Activated CD4-positive, alpha-beta memory T cell treated with anti-CD3 and anti-CD28 coated beads for 36 hours (primary cell): ENCODE measurements at regions of chr10 and their contacts with region 1.

Region 1: DNA sequence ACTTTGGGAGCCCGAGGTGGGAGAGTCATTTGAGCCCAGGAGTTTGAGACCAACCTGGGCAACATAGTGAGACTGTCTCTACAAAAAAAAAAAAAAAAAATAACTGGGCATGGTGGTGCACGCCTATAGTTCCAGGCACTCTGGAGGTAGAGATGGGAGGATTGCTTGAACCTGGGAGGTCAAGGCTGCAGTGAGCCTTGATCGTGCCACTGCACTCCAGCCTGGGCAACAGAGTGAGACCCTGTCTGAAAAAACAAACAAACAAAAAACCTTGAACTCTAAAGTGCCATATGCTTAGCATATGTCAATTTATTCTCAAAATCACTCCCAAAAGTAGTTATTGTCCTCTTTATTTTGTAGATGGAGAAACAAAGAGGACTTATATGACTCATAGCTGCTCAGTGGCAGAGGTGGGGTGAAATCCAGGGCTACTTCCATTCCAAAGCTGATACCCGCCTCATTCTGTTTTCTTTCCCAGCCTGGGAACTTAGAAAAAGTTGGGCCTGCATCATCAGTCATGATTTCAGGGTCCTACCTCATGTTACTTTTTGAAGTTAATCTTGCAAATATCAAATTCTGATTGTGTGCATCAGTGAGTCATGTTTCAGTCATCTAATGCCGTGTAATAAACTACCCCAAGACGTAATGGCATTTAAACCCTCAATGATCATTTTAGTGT is 13.3 kb downstream of the DHTKD1 start:
- DNase-seq: no peak
- H3K4me3 Mint-ChIP-seq: no peak overlapping the region
- H3K27ac Mint-ChIP-seq: no peak overlapping the region
- H3K4me1 Mint-ChIP-seq: no peaks in the 10 kb centered on the region
- H3K27me3 Mint-ChIP-seq: no peaks in the 10 kb centered on the region

Region 2: DNA sequence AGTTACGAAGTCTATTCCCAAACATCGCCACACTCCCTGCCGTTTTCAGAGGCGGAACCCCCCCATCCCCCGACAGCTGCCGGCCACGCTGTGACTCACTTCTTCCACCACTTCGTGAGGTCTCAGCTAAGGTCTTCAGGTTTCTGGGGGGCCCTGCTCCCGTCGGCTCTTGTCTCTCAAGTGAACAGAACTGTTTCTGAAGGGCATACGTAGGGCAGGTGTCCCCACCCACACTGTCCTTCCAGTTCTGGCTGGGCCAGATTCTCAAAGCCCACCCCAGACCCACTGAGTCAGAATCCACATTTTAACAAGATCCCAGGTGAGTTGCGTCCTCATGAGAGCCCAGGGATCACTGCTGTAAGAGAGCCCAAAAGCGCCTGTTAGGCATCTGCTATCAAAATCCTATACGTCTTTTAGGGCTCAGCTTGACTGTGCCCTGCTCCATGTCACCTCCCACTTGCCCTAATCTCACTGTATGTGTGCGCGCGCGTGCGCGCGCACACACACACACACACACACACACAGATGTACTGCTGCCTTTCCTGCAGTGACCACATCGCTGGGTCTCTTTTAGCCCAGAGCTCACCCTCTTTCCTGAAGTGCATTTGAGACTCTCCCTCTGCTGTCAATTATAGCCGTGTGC is 180.1 kb before region 1 on chr10:
- CTCF ChIA-PET with region 1: no interaction called
- POLR2A ChIA-PET with region 1: no interaction called
- intact Hi-C with region 1: no loop called
- DNase-seq: no peak
- H3K4me3 Mint-ChIP-seq: no peak overlapping the region
- H3K27ac Mint-ChIP-seq: no peak overlapping the region
- H3K4me1 Mint-ChIP-seq: no peaks in the 10 kb centered on the region
- H3K27me3 Mint-ChIP-seq: no peaks in the 10 kb centered on the region

Region 3: DNA sequence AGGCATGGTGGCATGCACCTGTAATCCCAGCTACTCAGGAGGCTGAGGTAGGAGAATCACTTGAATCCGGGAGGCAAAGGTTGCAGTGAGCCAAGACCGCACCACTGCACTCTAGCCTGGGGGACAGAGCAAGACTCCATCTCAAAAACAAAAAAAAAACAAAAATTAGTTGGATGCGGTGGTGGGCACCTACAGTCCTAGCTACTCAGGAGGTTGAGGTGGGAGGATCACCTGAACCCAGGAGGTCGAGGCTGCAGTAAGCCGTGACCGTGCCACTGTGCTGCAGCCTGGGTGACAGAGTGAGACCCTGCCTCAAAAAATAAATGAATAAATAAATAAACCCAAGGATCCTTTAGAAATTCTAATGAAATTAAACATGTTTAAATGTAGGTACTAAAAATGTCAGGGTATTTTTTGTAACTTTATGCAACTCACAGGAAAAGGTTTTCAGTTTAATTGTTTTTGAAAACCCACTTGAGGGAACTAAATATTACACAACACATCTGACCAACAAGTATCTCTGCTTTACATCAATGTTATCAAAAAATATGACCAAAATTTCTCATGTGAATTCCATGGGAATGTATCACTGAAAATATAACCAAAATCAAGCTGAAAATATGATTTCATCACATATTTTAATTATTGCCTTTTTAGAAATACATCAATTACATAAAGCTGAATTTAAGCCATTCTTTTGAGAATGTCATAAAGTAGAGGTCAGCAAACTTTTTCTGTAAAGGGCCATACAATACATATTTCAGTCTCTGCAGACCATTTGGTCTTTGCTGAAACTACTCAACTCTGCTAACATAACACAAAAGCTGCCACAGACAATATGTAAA is 63.4 kb before region 1 on chr10:
- CTCF ChIA-PET with region 1: no interaction called
- POLR2A ChIA-PET with region 1: no interaction called
- intact Hi-C with region 1: no loop called
- DNase-seq: no peak
- H3K4me3 Mint-ChIP-seq: no peak overlapping the region
- H3K27ac Mint-ChIP-seq: no peak overlapping the region
- H3K4me1 Mint-ChIP-seq: peaks cover 14% of the 10 kb centered on the region
- H3K27me3 Mint-ChIP-seq: no peaks in the 10 kb centered on the region

Region 4: GRCh38 chr10:12097791-12098190 is 15.8 kb after region 1 on chr10:
- CTCF ChIA-PET with region 1: no interaction called
- POLR2A ChIA-PET with region 1: no interaction called
- intact Hi-C with region 1: loop called (anchors 1 kb)
- DNase-seq: no peak
- H3K4me3 Mint-ChIP-seq: no peak overlapping the region
- H3K27ac Mint-ChIP-seq: no peak overlapping the region
- H3K4me1 Mint-ChIP-seq: no peaks in the 10 kb centered on the region
- H3K27me3 Mint-ChIP-seq: no peaks in the 10 kb centered on the region

Region 5: DNA sequence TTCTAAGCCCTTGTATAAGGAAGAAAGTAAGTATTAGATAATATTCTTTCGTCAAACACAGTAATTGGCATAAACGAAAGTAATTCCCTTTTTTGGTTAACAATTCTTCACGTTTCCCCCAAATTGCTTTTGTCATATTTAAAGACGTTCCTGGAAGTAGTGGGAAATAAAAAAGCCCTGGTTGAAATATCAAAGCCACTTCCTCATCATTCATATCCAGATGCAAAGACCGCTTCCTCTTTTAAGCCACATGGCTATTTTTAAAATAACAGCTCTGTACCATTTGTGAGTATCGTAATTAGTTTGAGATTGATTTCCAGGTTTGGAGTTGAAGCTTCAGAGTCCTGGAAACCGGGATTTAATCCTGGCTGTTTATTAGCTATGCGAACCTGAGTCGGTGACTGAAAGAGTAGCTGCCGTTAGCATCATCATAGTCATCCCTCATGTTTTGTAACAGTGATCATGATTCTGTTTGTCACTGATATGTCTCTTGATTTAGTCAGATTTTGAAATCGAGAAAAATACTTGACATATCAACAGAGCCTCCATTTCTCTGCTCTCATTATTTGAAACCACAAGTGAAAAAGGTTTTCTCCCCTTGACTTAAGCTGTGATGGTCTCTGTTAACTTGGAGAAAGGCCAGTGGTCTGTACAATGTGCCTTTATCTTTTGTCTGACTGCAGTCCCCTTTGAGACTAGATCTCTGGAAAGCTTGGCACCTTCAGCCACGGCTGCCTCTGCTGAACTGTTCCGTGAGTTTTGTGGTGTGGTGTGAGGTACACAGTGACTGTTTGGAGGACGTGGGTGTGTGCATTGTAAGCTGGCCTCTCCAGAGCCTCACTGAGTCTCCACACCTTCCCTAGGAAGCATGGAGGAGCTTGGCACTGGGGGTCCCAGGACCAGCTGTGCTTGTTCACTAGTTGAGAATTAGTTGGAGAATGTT is 1036.1 kb after region 1 on chr10:
- CTCF ChIA-PET with region 1: no interaction called
- POLR2A ChIA-PET with region 1: no interaction called
- intact Hi-C with region 1: no loop called
- DNase-seq: no peak
- H3K4me3 Mint-ChIP-seq: no peak overlapping the region
- H3K27ac Mint-ChIP-seq: no peak overlapping the region
- H3K4me1 Mint-ChIP-seq: peaks cover 18% of the 10 kb centered on the region
- H3K27me3 Mint-ChIP-seq: no peaks in the 10 kb centered on the region